GM12878 (cell line): ENCODE measurements at regions of chr17 and their contacts with region 1.

Region 1: DNA sequence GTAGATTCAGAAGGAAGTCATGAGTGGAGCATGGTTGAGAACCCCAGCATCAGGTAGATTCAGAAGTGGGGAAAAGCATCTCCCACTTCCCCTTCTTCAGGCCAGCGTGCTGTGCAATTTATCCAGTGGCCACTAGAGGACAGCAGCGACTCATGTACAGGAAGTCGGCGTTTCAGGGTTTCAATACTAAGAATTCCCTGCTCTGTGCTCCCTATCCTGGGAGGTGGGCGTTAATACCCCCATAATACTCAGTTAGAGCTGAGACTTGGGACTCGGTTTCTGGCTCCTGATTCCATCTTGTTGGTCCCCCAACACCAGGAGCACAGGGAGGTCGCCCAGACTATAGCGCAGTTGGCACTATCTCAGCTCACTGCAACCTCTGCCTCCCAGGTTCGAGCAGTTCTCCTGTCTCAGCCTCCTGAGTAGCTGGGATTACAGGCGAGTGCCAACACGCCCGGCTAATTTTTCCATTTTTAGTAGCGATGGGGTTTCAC is 75.3 kb upstream of the AMZ2 start:
- DNase-seq: no peak
- ATAC-seq: peak; percentile 90
- H3K4me3 ChIP-seq: no peak overlapping the region
- H3K27ac ChIP-seq: no peak overlapping the region
- H3K4me1 ChIP-seq: no peaks in the 10 kb centered on the region; the same call in 1 of the 2 replicates
- H3K27me3 ChIP-seq: no peaks in the 10 kb centered on the region
- CTCF ChIP-seq: peak; percentile 78 to 99 (median 96)
- EP300 ChIP-seq: no peak
- POLR2A ChIP-seq: no peak
- RAD21 ChIP-seq: peak; percentile 94

Region 2: DNA sequence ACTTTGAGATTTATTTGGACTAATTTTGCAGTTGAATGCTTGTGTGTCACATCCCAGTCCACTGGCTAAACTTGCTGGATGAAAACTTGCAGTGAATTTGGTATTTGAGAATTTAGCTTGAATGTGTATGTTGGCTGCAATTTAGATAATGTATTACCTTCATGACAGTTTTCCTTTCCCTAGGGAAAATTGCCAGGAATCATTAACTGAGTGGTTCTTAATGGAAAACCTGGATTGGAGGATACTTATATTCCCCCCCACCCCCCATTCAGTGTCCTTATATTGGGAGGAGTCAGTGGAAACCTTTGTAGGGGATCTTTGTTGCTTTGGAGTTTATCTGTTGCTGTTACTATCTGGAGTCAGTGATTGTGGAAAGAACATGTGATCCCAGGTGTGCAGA is 69.4 kb before region 1 on chr17:
- CTCF ChIA-PET with region 1: no interaction called
- POLR2A ChIA-PET with region 1: no interaction called
- RAD21 ChIA-PET with region 1: no interaction called
- SMC1A ChIA-PET with region 1: no interaction called
- in situ Hi-C with region 1: no loop called
- intact Hi-C with region 1: no loop called
- DNase-seq: no peak
- ATAC-seq: no peak
- H3K4me3 ChIP-seq: 0 out of 2 replicates have a peak overlapping the region, but pooled peaks have one; percentile 70
- H3K27ac ChIP-seq: no peak overlapping the region
- H3K4me1 ChIP-seq: peaks cover 4% of the 10 kb centered on the region; the same call in 1 of the 2 replicates
- H3K27me3 ChIP-seq: 0 out of 4 replicates have a peak, but pooled peaks cover 0 to 3% of the 10 kb centered on the region in 2 experiments
- CTCF ChIP-seq: no peak
- EP300 ChIP-seq: no peak
- POLR2A ChIP-seq: no peak
- RAD21 ChIP-seq: no peak

Region 3: GRCh38 chr17:68184816-68185436 is 12.4 kb after region 1 on chr17:
- CTCF ChIA-PET with region 1: interaction called, 22 read pairs
- POLR2A ChIA-PET with region 1: interaction called, 7 read pairs
- RAD21 ChIA-PET with region 1: interaction called, 22 read pairs
- SMC1A ChIA-PET with region 1: interaction called, 9 read pairs
- in situ Hi-C with region 1: no loop called
- intact Hi-C with region 1: no loop called
- DNase-seq: no peak
- ATAC-seq: peak; percentile 74
- H3K4me3 ChIP-seq: peak overlapping the region; percentile 50; the same call in 1 of the 2 replicates
- H3K27ac ChIP-seq: peak overlapping the region; percentile 78
- H3K4me1 ChIP-seq: peaks cover 34% of the 10 kb centered on the region
- H3K27me3 ChIP-seq: no peaks in the 10 kb centered on the region
- CTCF ChIP-seq: no peak
- EP300 ChIP-seq: no peak
- POLR2A ChIP-seq: no peak
- RAD21 ChIP-seq: no peak

Region 4: GRCh38 chr17:68205251-68205807 is 32.8 kb after region 1 on chr17:
- CTCF ChIA-PET with region 1: interaction called, 125 read pairs
- POLR2A ChIA-PET with region 1: interaction called, 3 read pairs
- RAD21 ChIA-PET with region 1: interaction called, 44 read pairs
- SMC1A ChIA-PET with region 1: interaction called, 35 read pairs
- in situ Hi-C with region 1: no loop called
- intact Hi-C with region 1: loop called (anchors 1 kb)
- DNase-seq: no peak
- ATAC-seq: peak; percentile 92
- H3K4me3 ChIP-seq: peak overlapping the region; percentile 90
- H3K27ac ChIP-seq: peak overlapping the region; percentile 79
- H3K4me1 ChIP-seq: peaks cover 8% of the 10 kb centered on the region
- H3K27me3 ChIP-seq: 0 out of 4 replicates have a peak, but pooled peaks cover 2 to 4% of the 10 kb centered on the region in 2 experiments
- CTCF ChIP-seq: peak; percentile 85 to 96 (median 92)
- EP300 ChIP-seq: no peak
- POLR2A ChIP-seq: peak; percentile 79
- RAD21 ChIP-seq: peak; percentile 55

Region 5: DNA sequence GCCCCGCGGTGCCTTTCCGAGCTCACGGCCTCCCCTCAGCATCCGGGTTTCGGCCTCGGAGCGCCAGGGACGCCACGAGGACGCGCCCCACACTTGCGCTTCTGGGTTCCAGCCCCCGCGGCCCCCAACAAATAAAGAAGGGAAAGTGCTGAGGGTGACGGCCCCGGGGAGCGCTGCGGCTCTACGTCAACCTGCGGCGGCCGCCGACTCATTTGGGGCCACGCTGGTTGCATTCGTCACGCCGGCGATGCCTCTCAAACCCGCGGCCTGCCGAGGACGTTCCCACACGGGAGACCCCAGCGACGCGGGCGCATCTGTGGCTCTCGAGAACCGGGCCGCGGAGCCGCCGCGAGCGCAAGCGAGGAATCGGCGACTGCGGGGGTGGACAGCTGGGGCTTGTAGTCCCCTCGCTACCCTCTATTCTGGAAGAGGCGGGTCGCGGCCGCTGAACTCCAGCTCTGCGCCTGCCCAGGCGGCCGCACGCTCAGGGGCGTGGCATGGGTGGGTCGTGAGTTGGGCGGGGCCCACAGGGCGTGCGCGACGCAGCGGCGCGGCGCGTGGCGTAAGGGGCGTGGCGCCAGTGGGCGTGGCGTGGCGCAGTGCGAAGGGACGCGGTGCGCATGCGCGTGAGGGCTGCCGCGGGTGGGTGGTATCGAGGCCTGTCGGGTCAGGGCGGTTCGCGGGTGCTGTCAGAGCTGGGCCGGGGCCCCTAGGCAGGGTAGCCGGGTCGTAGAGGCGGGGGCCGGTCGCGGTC is 75.1 kb after region 1 on chr17 and contains the start of gene AMZ2:
- CTCF ChIA-PET with region 1: interaction called, 14 read pairs
- POLR2A ChIA-PET with region 1: interaction called, 3 read pairs
- RAD21 ChIA-PET with region 1: no interaction called
- SMC1A ChIA-PET with region 1: interaction called, 5 read pairs
- in situ Hi-C with region 1: no loop called
- intact Hi-C with region 1: no loop called
- DNase-seq: peak; percentile 81
- ATAC-seq: peak; percentile 92
- H3K4me3 ChIP-seq: peak within 1 kb of the TSS; percentile 85
- H3K27ac ChIP-seq: peak within 1 kb of the TSS; percentile 91
- H3K4me1 ChIP-seq: peaks cover 10% of the 10 kb centered on the region
- H3K27me3 ChIP-seq: no peaks in the 10 kb centered on the region
- CTCF ChIP-seq: no peak
- EP300 ChIP-seq: no peak
- POLR2A ChIP-seq: peak; percentile 95
- RAD21 ChIP-seq: no peak
- polyA plus RNA-seq, gene AMZ2: 127 to 135 TPM

Region 6: GRCh38 chr17:68398691-68399637 is 226.5 kb after region 1 on chr17:
- CTCF ChIA-PET with region 1: interaction called, 15 read pairs
- POLR2A ChIA-PET with region 1: no interaction called
- RAD21 ChIA-PET with region 1: interaction called, 13 read pairs
- SMC1A ChIA-PET with region 1: interaction called, 15 read pairs
- in situ Hi-C with region 1: no loop called
- intact Hi-C with region 1: no loop called
- DNase-seq: no peak
- ATAC-seq: peak; percentile 99
- H3K4me3 ChIP-seq: no peak overlapping the region
- H3K27ac ChIP-seq: no peak overlapping the region
- H3K4me1 ChIP-seq: peaks cover 6% of the 10 kb centered on the region
- H3K27me3 ChIP-seq: no peaks in the 10 kb centered on the region
- CTCF ChIP-seq: peak; percentile 84 to 89 (median 88)
- EP300 ChIP-seq: no peak
- POLR2A ChIP-seq: peak; percentile 34; the same call in 1 of the 2 replicates
- RAD21 ChIP-seq: peak; percentile 82

Region 7: DNA sequence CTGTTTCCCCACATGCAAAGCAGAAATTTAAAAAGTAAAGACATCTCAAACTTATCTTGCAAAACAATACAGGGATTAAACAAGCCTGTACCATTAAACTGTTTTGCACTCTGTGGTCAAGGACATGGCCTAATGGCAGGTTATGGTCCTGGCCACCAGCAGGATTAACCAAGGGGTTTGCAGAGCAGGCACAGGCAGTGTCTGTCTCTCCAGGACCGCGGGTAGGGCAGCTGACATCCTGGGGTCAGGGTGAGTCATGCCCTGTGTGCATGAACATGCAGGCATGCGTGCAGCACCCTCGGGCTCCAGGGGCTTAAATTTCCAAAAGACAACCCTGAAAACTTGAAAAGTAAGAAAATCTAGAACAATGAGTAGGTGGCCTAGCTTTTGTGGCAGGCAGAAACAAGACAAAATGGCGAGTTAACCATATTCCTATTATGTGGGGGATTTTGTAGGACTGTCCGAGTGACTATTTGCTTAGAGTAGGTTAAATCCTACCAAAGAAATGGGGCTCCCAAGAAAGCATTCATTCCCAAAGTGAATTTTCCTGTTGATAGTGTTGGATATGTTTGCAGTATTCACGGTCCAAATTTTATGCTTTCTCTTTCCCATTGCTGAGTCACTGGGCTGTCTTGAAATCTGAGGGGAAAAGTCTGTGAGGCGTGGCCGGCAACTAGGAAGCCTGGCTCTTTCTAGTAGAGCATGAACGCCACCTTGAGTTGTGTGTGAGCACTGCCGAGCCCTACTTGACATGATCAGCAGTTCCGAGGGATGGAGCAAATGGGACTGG is 587.0 kb after region 1 on chr17:
- CTCF ChIA-PET with region 1: no interaction called
- POLR2A ChIA-PET with region 1: no interaction called
- RAD21 ChIA-PET with region 1: no interaction called
- SMC1A ChIA-PET with region 1: no interaction called
- in situ Hi-C with region 1: loop called (anchors 25 kb)
- intact Hi-C with region 1: loop called (anchors 10 kb)
- DNase-seq: no peak
- ATAC-seq: peak; percentile 96
- H3K4me3 ChIP-seq: no peak overlapping the region; the same call in 1 of the 2 replicates
- H3K27ac ChIP-seq: no peak overlapping the region; the same call in 1 of the 2 replicates
- H3K4me1 ChIP-seq: no peaks in the 10 kb centered on the region
- H3K27me3 ChIP-seq: no peaks in the 10 kb centered on the region
- CTCF ChIP-seq: peak; percentile 81 to 83 (median 82)
- EP300 ChIP-seq: no peak
- POLR2A ChIP-seq: no peak
- RAD21 ChIP-seq: peak; percentile 76